ENCODE measurements at regions of chr17 and their contacts with region 1.

Region 1: DNA sequence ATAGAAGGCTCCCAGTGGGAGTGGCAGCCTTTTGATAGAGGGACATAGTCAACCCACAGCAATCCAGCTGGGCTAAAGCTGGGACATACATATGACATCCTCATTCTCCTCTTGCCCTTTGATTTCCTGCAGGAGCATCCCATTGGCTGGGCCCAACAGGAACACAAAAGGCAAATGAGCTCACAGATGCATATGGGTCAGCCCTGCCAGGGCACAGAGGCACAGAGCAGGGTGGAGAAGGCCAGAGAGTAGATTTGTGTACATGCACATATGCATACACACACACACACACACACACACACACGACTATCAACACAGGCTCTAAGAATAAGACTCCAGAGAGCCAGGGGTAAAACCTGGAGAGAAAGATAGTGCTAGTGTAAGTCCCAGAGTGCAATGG is 58.6 kb downstream of the MMD start:
- DNase-seq: no peak
- ATAC-seq: no peak
- H3K4me3 ChIP-seq: no peak overlapping the region
- H3K4me3 Mint-ChIP-seq: no peak overlapping the region
- H3K27ac ChIP-seq: no peak overlapping the region
- H3K27ac Mint-ChIP-seq: no peak overlapping the region
- H3K4me1 ChIP-seq: no peaks in the 10 kb centered on the region
- H3K4me1 Mint-ChIP-seq: no peaks in the 10 kb centered on the region
- H3K27me3 ChIP-seq: no peaks in the 10 kb centered on the region
- H3K27me3 Mint-ChIP-seq: peaks cover 7% of the 10 kb centered on the region
- CTCF ChIP-seq: no peak

Region 2: DNA sequence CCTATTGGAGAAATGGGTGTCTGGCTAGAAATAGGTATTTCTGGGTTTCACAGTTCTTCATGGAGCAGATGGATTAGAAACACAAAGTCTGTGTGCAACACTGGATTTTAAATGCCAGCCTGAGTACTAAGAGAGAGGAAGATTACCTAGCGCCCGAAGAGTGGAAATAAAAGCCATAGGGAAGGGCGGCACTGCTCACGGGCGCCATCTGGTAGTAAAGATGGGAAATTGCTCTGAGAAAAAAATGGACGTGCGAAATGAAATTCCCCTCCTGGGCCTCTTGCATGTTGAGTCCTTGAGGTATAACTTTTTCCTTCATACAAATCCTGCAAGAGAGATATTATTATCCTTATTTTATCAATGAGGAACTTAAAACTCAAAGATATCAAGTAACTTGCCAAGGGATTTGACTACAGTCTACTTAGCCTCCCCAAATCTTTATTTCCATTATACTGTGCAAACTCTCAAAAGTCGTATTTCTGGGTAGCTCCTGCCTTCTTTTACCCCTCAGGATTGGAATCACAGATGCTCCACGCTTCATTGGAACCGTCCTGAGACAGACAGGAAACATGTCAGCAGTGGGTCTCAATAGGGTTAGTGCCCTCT is 14.2 kb before region 1 on chr17:
- CTCF ChIA-PET with region 1: interaction called, 31 read pairs
- POLR2A ChIA-PET with region 1: no interaction called
- intact Hi-C with region 1: no loop called
- DNase-seq: peak in 8 of 9 experiments; percentile 1 to 61 (median 28)
- ATAC-seq: peak; percentile 54
- H3K4me3 ChIP-seq: no peak overlapping the region
- H3K4me3 Mint-ChIP-seq: no peak overlapping the region
- H3K27ac ChIP-seq: no peak overlapping the region
- H3K27ac Mint-ChIP-seq: no peak overlapping the region
- H3K4me1 ChIP-seq: peaks cover 8% of the 10 kb centered on the region
- H3K4me1 Mint-ChIP-seq: peaks cover 9% of the 10 kb centered on the region
- H3K27me3 ChIP-seq: no peaks in the 10 kb centered on the region
- H3K27me3 Mint-ChIP-seq: peaks cover 4% of the 10 kb centered on the region
- CTCF ChIP-seq: peak; percentile 84